ENCODE measurements at regions of chr14 and their contacts with region 1.

Region 1: DNA sequence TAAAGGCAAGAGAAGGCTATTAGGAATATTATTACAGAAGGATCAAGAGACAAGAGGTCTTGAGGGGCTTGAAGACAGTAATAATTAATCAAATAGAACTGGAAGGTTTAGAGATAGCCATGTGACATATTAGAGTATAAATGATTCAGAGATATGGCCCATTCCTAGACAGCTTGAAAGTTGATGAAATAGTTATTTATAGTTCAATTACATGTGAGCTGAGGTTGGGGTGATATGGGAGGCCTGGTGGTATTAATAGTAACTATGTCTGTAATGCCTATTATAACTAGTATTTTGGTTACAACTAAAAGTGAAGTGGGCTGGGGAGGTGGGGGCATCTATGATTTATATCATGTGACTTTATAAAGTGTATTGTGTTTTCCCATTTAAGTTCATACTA is 14.1 kb upstream of the MIS18BP1 start:
- DNase-seq: no peak
- H3K4me3 ChIP-seq: no peak overlapping the region
- H3K27ac ChIP-seq: no peak overlapping the region
- H3K4me1 ChIP-seq: no peaks in the 10 kb centered on the region
- H3K27me3 ChIP-seq: no peaks in the 10 kb centered on the region
- CTCF ChIP-seq: no peak

Region 2: DNA sequence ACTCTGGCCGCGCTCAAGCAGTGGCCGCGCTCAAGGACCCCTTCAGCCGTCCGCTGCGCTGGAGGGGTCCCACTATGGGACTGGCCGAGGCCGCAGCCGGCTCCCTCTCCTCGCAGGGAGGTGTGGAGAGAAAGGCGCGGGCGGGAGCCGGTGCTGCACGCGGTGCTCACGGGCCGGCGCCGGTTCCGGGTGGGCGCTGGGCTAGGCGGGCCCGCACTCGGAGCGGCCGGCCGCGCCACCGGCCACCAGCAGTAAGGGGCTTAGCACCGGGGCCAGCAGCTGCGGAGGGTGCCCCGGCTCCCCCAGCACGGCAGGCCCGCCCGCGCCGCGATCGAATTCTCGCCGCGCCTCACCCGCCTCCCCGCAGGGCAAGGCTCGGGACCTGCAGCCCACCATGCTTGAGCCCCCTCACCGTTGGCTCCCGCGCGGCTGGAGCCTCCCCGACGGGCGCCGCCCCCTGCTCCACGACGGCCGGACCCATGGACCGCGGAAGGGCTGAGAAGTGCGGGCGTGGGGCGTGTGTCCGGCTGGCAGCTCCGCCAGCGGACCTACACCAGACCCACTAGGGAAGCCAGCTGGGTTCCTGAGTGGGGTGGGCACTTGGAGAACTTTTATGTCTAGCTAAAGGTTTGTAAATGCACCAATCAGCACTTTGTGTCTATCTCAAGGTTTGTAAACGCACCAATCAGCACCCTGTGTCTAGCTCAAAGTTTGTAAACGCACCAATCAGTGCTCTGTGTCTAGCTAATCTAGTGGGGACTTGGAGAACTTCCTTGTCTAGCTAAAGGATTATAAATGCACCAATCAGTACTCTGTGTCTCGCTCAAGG is 354.8 kb before region 1 on chr14:
- intact Hi-C with region 1: loop called (anchors 10 kb)
- DNase-seq: peak in 4 of 5 donors; percentile 26 to 72 (median 56)
- H3K4me3 ChIP-seq: peak overlapping the region in 2 of 3 donors; percentile 6 to 50
- H3K27ac ChIP-seq: no peak overlapping the region
- H3K4me1 ChIP-seq: no peaks in the 10 kb centered on the region
- H3K27me3 ChIP-seq: no peaks in the 10 kb centered on the region
- CTCF ChIP-seq: no peak

Region 3: GRCh38 chr14:45526715-45527549 is 259.9 kb after region 1 on chr14:
- intact Hi-C with region 1: no loop called
- DNase-seq: peak in 4 of 5 donors; percentile 24 to 44 (median 28)
- H3K4me3 ChIP-seq: no peak overlapping the region
- H3K27ac ChIP-seq: no peak overlapping the region
- H3K4me1 ChIP-seq: no peaks in the 10 kb centered on the region
- H3K27me3 ChIP-seq: no peaks in the 10 kb centered on the region
- CTCF ChIP-seq: peak; percentile 51

Measured in kidney (tissue), 22 donors.